Activated naive CD4-positive, alpha-beta T cell treated with anti-CD3 and anti-CD28 coated beads for 36 hours (primary cell): ENCODE measurements at regions of chr7 and their contacts with region 1.

Region 1: DNA sequence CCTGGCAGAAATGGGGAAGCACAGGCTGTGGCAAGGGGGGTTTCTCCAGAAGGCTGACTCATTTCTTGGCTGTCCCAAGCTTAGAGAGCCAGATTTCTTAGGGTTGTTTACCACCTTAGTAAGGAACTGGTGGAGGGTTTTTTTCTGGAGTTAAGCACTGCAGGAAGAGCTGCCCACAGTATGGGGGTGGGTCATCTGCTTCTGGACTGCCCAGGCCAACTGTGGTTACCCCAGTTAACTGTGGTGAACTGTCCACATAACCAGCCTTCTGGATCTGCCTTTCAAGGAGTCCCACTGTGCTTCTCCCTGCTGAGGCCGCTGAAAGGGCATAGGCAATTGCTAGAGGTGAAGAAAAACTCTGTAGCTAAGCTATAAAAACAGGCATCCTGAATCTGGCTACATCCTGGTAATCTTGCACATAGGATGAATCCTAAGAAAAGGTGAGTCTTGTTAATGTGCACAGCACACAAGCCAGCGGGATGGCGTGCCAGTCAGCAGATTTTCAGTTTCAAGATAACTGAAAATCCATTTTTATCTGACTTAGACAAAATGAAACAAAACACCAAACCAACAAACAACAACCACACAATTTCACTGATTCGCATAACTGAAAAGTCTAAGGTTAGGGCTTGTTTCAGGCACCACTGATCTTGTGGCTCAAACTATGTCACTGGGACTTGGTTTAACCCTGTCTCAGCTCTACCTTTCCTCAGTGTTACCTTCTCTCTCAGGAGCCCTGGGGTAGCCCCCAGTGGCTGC is 21.6 kb upstream of the TSPAN33 start:
- DNase-seq: peak; percentile 74
- H3K4me3 Mint-ChIP-seq: no peak overlapping the region
- H3K27ac Mint-ChIP-seq: peak overlapping the region; percentile 73
- H3K4me1 Mint-ChIP-seq: peaks cover 24% of the 10 kb centered on the region
- H3K27me3 Mint-ChIP-seq: peaks cover 2% of the 10 kb centered on the region

Region 2: DNA sequence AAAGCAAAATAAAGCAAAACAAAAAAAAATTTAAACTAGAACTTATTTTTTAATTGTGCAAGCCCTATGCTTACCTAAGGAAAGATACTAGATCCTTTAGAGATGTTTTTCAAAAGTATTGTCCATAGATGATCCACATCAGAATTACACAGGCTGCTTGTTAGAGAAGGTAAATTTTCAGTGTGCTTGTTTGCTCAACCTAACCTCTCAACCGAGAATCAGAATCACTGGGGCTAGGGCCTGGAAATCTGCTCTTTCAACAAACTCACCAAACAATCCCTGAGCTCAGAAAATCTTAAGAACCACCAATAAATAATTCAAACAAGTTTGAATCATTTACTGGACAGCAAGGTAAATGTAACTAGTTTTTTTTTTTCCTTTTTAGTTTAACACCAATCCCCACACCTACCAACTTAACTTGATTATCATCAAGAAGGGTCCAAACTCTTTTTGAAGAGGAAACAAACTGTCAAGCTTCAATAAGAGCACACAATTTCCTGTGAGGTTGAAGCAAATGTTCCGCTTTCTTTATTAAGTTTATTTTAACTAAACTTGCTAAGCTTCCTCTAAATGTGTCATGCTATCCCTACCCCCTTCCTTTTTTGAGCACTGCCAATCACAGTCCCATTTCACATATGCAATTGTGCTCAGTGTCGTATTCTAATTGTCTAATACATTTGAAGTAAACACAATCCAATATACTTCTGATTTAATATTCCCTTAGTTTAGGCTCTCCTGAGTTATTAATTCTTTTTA is 14.1 kb after region 1 on chr7:
- CTCF ChIA-PET with region 1: no interaction called
- intact Hi-C with region 1: loop called (anchors 1 kb)
- DNase-seq: no peak
- H3K4me3 Mint-ChIP-seq: peak overlapping the region; percentile 22
- H3K27ac Mint-ChIP-seq: peak overlapping the region; percentile 82
- H3K4me1 Mint-ChIP-seq: peaks cover 27% of the 10 kb centered on the region
- H3K27me3 Mint-ChIP-seq: no peaks in the 10 kb centered on the region